OCI-LY7 (cell line): ENCODE measurements at regions of chr1 and their contacts with region 1.

Region 1: DNA sequence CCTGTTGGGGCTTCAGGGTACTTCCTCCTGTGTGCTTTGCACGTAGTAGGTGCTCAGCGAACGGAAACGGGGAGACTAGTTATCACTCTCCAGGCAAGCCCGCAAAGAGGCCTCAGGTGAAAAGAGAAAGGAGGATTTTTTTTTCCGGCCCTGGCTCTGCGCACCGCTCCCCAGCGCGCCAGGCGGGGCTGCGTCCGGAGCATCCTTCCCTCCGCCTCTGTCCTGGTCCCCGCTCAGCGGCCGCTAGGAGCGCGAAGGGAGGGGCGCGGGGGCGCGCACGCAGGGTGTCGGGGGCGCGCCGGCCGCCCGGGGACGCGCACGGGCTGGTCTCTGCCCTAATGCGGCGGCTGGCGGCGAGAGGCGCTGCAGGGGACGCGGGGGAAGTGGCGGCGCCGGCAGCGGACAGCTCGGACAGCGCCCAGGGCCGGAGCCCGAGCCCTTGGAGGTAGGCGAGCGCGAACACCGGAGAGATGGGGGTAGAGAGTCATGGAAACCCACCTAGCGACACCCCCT is 42.3 kb upstream of the NFASC start:
- DNase-seq: no peak
- H3K4me3 ChIP-seq: no peak overlapping the region
- H3K27ac ChIP-seq: no peak overlapping the region
- H3K4me1 ChIP-seq: no peaks in the 10 kb centered on the region
- CTCF ChIP-seq: no peak

Region 2: GRCh38 chr1:204685236-204686006 is 143.0 kb before region 1 on chr1 and contains the start of gene LRRN2:
- CTCF ChIA-PET with region 1: no interaction called
- POLR2A ChIA-PET with region 1: no interaction called
- intact Hi-C with region 1: no loop called
- DNase-seq: no peak
- H3K4me3 ChIP-seq: no peak within 1 kb of the TSS
- H3K27ac ChIP-seq: no peak within 1 kb of the TSS
- H3K4me1 ChIP-seq: no peaks in the 10 kb centered on the region
- CTCF ChIP-seq: no peak
- total RNA-seq, gene LRRN2: not detected in 2 replicates

Region 3: DNA sequence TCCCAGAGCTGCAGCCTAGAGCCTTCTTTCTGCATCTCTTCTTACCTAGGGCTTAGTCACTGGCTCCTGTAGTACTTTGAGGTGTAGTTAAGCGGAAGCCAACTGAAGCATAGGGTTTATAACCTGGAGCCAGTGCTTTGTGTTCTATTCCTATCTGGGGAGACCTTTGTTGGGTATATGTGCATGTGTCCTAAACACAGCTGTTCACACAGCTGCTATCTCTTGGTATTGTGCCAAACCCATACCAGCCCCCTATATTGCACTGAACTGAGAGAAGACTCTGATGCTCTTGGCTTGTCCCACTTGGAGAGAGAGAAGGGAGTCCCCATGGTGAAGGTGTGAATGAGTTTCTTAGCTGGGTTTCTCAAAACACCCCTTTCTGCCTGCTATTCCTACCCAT is 25.0 kb after region 1 on chr1:
- CTCF ChIA-PET with region 1: no interaction called
- POLR2A ChIA-PET with region 1: no interaction called
- intact Hi-C with region 1: no loop called
- DNase-seq: no peak
- H3K4me3 ChIP-seq: no peak overlapping the region
- H3K27ac ChIP-seq: no peak overlapping the region
- H3K4me1 ChIP-seq: no peaks in the 10 kb centered on the region
- CTCF ChIP-seq: no peak

Region 4: GRCh38 chr1:204941421-204942338 is 113.3 kb after region 1 on chr1:
- CTCF ChIA-PET with region 1: no interaction called
- POLR2A ChIA-PET with region 1: interaction called, 4 read pairs
- intact Hi-C with region 1: loop called (anchors 2 kb)
- DNase-seq: peak; percentile 57
- H3K4me3 ChIP-seq: no peak overlapping the region
- H3K27ac ChIP-seq: no peak overlapping the region
- H3K4me1 ChIP-seq: no peaks in the 10 kb centered on the region
- CTCF ChIP-seq: peak; percentile 94

Region 5: GRCh38 chr1:204975570-204976235 is 147.3 kb after region 1 on chr1:
- CTCF ChIA-PET with region 1: no interaction called
- POLR2A ChIA-PET with region 1: no interaction called
- intact Hi-C with region 1: loop called (anchors 5 kb)
- DNase-seq: peak; percentile 51
- H3K4me3 ChIP-seq: no peak overlapping the region
- H3K27ac ChIP-seq: no peak overlapping the region
- H3K4me1 ChIP-seq: no peaks in the 10 kb centered on the region
- CTCF ChIP-seq: peak; percentile 84